Aorta (tissue), 5 donors: ENCODE measurements at regions of chr17 and their contacts with region 1.

Region 1: DNA sequence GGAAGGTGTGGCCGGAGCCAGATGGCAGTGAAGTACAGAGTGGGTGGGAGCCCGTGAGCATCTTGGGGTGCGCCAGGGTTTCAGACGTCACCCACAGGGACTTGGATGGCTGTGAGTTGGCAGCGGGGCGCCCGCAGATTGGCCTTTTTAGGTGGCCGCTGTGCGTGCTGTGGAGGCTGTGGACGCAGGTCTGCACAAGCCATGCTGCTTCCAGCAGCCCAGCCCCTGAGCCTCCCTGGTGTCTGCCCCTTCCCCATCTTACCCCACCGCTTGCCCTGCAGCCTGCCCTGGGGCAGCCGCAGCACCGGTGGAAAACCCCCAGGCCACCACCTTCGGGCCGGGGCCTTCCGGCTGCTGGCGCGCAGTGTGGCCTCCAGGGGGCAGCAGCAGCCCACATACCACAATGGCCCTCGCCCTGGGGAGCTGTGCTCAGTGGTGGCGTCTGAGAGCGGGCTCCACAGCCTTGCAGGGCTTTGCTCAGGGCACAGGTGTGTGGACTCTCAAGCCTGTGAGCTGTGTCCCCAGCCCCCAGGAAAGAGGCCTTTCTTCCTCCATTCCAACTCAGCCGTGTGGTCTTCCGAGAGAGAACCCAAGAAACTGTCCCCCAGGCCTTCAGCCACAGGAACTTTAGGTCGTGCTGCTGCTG is 11.8 kb downstream of the ENDOV start:
- DNase-seq: peak; percentile 76 to 93
- ATAC-seq: peak; percentile 82
- H3K4me3 ChIP-seq: no peak overlapping the region
- H3K27ac ChIP-seq: no peak overlapping the region
- H3K4me1 ChIP-seq: no peaks in the 10 kb centered on the region
- H3K27me3 ChIP-seq: no peaks in the 10 kb centered on the region

Region 2: GRCh38 chr17:80219013-80219762 is 207.6 kb before region 1 on chr17:
- intact Hi-C with region 1: no loop called
- DNase-seq: peak; percentile 91 to 92
- ATAC-seq: peak; percentile 29
- H3K4me3 ChIP-seq: peak overlapping the region; percentile 65 to 97
- H3K27ac ChIP-seq: peak overlapping the region in 1 of 2 donors; percentile 19
- H3K4me1 ChIP-seq: no peaks in the 10 kb centered on the region
- H3K27me3 ChIP-seq: no peaks in the 10 kb centered on the region

Region 3: GRCh38 chr17:80327518-80327917 is 99.3 kb before region 1 on chr17:
- intact Hi-C with region 1: no loop called
- DNase-seq: peak; percentile 16 to 61
- ATAC-seq: no peak
- H3K4me3 ChIP-seq: no peak overlapping the region
- H3K27ac ChIP-seq: no peak overlapping the region
- H3K4me1 ChIP-seq: no peaks in the 10 kb centered on the region
- H3K27me3 ChIP-seq: no peaks in the 10 kb centered on the region

Region 4: GRCh38 chr17:80477647-80478478 is 51.1 kb after region 1 on chr17:
- intact Hi-C with region 1: loop called in 1 of 2 experiments (anchors 5 kb)
- DNase-seq: no peak
- ATAC-seq: peak; percentile 51
- H3K4me3 ChIP-seq: no peak overlapping the region
- H3K27ac ChIP-seq: no peak overlapping the region
- H3K4me1 ChIP-seq: no peaks in the 10 kb centered on the region
- H3K27me3 ChIP-seq: no peaks in the 10 kb centered on the region

Region 5: GRCh38 chr17:80575057-80575875 is 148.5 kb after region 1 on chr17:
- intact Hi-C with region 1: loop called (anchors 1 to 2 kb)
- DNase-seq: peak; percentile 90 to 93
- ATAC-seq: peak; percentile 91
- H3K4me3 ChIP-seq: no peak overlapping the region
- H3K27ac ChIP-seq: no peak overlapping the region
- H3K4me1 ChIP-seq: no peaks in the 10 kb centered on the region
- H3K27me3 ChIP-seq: no peaks in the 10 kb centered on the region

Region 6: GRCh38 chr17:80866147-80866793 is 439.5 kb after region 1 on chr17:
- intact Hi-C with region 1: loop called in 1 of 2 experiments (anchors 2 kb)
- DNase-seq: peak; percentile 81 to 90
- ATAC-seq: no peak
- H3K4me3 ChIP-seq: no peak overlapping the region
- H3K27ac ChIP-seq: no peak overlapping the region
- H3K4me1 ChIP-seq: no peaks in the 10 kb centered on the region
- H3K27me3 ChIP-seq: no peaks in the 10 kb centered on the region